CD8-positive, alpha-beta memory T cell (primary cell): ENCODE measurements at regions of chr5 and their contacts with region 1.

Region 1: DNA sequence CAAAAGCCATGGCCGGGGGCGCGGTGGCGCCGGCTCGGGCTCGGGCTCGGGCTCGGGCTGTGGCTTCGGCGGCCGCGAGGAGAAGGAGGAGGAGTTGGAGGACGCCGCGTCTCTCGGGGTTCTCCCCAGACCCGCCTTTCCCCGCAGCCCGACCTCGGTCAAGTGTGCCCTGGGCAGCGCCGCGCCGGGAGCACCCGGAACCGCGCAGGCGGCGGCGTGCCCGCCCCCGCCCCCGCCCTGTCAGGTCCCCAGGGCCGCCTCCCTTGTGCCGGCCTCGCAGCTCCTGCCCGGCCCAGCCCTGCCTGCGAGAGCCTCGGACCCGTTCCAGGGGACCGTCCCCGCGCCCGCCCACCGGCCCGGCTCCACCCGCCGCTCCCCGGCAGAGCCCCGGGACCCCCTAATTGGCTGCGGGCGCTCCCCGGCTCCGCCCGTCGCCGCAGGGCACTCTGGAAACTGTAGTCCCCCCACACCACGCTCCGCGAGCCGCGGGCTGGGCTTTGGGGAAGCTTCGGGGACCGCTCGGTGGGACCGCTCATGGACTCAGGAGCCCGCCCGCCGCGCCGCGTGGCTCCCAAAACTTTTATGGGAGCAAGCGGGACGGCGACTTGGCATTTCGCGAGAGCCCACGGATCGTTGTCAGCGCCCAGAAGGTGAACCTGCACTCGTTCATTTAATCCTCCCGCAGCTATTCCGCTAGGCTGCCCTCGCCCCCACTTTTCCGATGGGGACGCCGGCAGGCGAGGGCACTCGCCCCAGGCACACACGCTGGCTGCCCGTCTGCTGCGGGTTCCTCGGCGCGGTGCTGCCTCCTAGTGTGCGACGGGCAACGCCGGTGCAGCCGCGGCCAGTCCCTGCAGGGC is at the start of gene STK10:
- DNase-seq: peak; percentile 84 to 94 (median 92)
- H3K4me3 ChIP-seq: peak within 1 kb of the TSS; percentile 83
- H3K4me3 Mint-ChIP-seq: peak within 1 kb of the TSS; percentile 97 to 100 (median 100)
- H3K27ac ChIP-seq: peak within 1 kb of the TSS; percentile 91
- H3K27ac Mint-ChIP-seq: peak within 1 kb of the TSS; percentile 98 to 100 (median 100)
- H3K4me1 ChIP-seq: peaks cover 22% of the 10 kb centered on the region
- H3K4me1 Mint-ChIP-seq: peaks cover 23 to 30% (median 28%) of the 10 kb centered on the region in 3 donors
- H3K27me3 ChIP-seq: no peaks in the 10 kb centered on the region
- H3K27me3 Mint-ChIP-seq: peaks cover 0 to 3% of the 10 kb centered on the region in 2 donors
- total RNA-seq, gene STK10: 113 to 118 TPM

Region 2: GRCh38 chr5:171750311-171750788 is 437.9 kb before region 1 on chr5:
- CTCF ChIA-PET with region 1: no interaction called
- POLR2A ChIA-PET with region 1: no interaction called
- DNase-seq: no peak
- H3K4me3 ChIP-seq: no peak overlapping the region
- H3K4me3 Mint-ChIP-seq: no peak overlapping the region
- H3K27ac ChIP-seq: no peak overlapping the region
- H3K27ac Mint-ChIP-seq: no peak overlapping the region
- H3K4me1 ChIP-seq: no peaks in the 10 kb centered on the region
- H3K4me1 Mint-ChIP-seq: no peaks in the 10 kb centered on the region
- H3K27me3 ChIP-seq: no peaks in the 10 kb centered on the region
- H3K27me3 Mint-ChIP-seq: peaks cover 2 to 19% of the 10 kb centered on the region in 2 donors

Region 3: GRCh38 chr5:171913987-171914273 is 274.3 kb before region 1 on chr5:
- CTCF ChIA-PET with region 1: interaction called, 10 read pairs
- POLR2A ChIA-PET with region 1: no interaction called
- DNase-seq: no peak
- H3K4me3 ChIP-seq: no peak overlapping the region
- H3K4me3 Mint-ChIP-seq: no peak overlapping the region
- H3K27ac ChIP-seq: no peak overlapping the region
- H3K27ac Mint-ChIP-seq: peak overlapping the region in 4 of 8 donors; percentile 30 to 73 (median 52)
- H3K4me1 ChIP-seq: peaks cover 11% of the 10 kb centered on the region
- H3K4me1 Mint-ChIP-seq: peaks cover 44 to 60% (median 57%) of the 10 kb centered on the region in 3 donors
- H3K27me3 ChIP-seq: no peaks in the 10 kb centered on the region
- H3K27me3 Mint-ChIP-seq: no peaks in the 10 kb centered on the region

Region 4: DNA sequence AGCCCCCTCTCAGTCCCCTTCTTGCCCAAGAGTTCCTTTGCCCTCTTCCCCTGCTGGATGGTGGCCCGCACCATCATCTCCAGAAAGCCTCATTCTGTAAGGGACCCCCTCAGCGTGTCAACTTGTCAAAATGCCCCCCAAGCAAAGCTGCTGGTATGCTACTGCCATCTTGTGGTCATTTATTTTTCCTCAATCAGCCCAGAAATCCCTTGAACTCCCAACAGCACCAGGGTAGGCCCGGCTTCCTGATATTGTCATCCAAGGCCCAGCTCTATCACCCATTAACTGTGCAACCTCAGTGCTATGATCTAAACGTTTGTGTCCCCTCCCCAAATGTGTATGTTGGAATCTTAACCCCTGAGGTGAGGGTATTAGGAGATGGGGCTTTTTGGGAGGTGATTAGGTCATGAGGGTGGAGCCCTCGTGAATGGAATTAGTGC is 128.6 kb before region 1 on chr5:
- CTCF ChIA-PET with region 1: interaction called, 11 read pairs
- POLR2A ChIA-PET with region 1: interaction called, 4 read pairs
- DNase-seq: peak in 1 of 5 donors; percentile 25
- H3K4me3 ChIP-seq: no peak overlapping the region
- H3K4me3 Mint-ChIP-seq: peak overlapping the region in 1 of 7 donors; percentile 5
- H3K27ac ChIP-seq: no peak overlapping the region
- H3K27ac Mint-ChIP-seq: peak overlapping the region in 7 of 8 donors; percentile 43 to 83 (median 59)
- H3K4me1 ChIP-seq: peaks cover 4% of the 10 kb centered on the region
- H3K4me1 Mint-ChIP-seq: peaks cover 16 to 20% (median 18%) of the 10 kb centered on the region in 3 donors
- H3K27me3 ChIP-seq: no peaks in the 10 kb centered on the region
- H3K27me3 Mint-ChIP-seq: peaks cover 0 to 4% of the 10 kb centered on the region in 2 donors

Region 5: DNA sequence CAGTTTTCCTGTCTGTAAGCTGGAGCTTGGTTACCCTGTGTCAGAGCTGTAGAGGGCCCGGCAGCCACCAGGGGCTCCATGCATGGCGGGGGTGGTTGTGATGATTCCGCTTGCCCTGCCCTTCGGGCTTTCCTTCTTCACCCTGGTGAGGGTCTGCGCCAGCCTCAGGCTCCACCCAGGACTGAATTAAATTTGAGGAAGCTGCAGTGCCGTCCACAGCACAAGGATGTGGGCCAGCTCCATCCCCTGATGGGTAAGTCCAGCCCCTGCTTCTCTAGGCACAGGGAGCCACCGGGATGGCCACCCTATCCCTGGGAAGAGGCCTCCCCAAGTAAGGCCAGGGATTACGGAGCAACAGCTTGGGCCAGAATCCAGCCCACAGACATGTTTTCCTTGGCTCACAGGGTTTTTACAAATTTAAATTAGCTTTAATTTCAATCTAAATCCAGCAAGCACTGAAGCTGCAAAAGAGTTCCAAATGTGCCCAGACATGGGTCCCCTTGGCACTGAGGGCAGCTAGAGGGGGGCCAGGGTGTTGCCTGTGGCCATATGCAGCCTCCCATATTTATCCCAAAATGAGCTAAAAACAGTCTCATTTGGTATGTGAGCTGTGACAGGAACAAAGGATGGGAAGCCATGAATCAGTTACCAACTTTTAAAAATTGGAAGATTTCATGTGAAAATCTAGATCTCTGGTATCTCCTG is 92.6 kb before region 1 on chr5:
- CTCF ChIA-PET with region 1: interaction called, 29 read pairs
- POLR2A ChIA-PET with region 1: no interaction called
- DNase-seq: no peak
- H3K4me3 ChIP-seq: no peak overlapping the region
- H3K4me3 Mint-ChIP-seq: no peak overlapping the region
- H3K27ac ChIP-seq: no peak overlapping the region
- H3K27ac Mint-ChIP-seq: peak overlapping the region in 3 of 8 donors; percentile 11 to 77 (median 65)
- H3K4me1 ChIP-seq: no peaks in the 10 kb centered on the region
- H3K4me1 Mint-ChIP-seq: peaks cover 11 to 26% (median 19%) of the 10 kb centered on the region in 3 donors
- H3K27me3 ChIP-seq: no peaks in the 10 kb centered on the region
- H3K27me3 Mint-ChIP-seq: no peaks in the 10 kb centered on the region

Region 6: DNA sequence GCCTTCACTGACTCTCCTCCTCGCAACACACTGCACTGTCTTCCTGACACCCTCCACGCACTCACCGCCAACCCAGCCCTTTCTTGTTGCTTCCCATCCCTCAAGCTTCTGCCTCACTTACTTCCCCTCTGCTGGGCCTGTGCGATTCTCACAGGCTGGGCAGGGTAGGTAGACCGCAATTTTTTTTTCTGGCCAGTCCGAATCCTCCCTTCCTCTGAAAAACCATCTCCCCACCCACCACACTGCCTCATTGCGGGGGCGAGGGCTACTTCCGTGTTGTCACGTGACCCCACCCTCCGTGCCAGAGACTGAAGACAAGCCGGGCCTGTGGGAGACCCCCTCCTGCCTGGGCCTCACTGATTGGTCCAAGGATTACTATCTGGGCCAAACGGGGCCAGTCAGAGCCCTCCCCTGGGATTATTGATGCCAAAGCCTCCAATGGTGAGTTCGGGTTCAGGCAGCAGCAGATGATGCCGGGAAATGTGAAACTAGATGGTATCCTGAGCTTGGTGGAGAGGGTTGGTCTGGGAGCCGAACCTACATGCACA is 73.3 kb before region 1 on chr5:
- CTCF ChIA-PET with region 1: interaction called, 177 read pairs
- POLR2A ChIA-PET with region 1: interaction called, 23 read pairs
- DNase-seq: peak; percentile 37 to 85 (median 71)
- H3K4me3 ChIP-seq: peak overlapping the region; percentile 40
- H3K4me3 Mint-ChIP-seq: peak overlapping the region; percentile 65 to 92 (median 78)
- H3K27ac ChIP-seq: peak overlapping the region; percentile 48
- H3K27ac Mint-ChIP-seq: peak overlapping the region; percentile 83 to 100 (median 96)
- H3K4me1 ChIP-seq: peaks cover 86% of the 10 kb centered on the region
- H3K4me1 Mint-ChIP-seq: peaks cover 73 to 90% (median 89%) of the 10 kb centered on the region in 3 donors
- H3K27me3 ChIP-seq: no peaks in the 10 kb centered on the region
- H3K27me3 Mint-ChIP-seq: peaks cover 0 to 4% of the 10 kb centered on the region in 2 donors

Region 7: GRCh38 chr5:172144291-172144815 is 43.9 kb before region 1 on chr5:
- CTCF ChIA-PET with region 1: interaction called, 11 read pairs
- POLR2A ChIA-PET with region 1: interaction called, 5 read pairs
- DNase-seq: peak in 1 of 5 donors; percentile 42
- H3K4me3 ChIP-seq: no peak overlapping the region
- H3K4me3 Mint-ChIP-seq: peak overlapping the region in 5 of 7 donors; percentile 6 to 62 (median 52)
- H3K27ac ChIP-seq: no peak overlapping the region
- H3K27ac Mint-ChIP-seq: peak overlapping the region; percentile 76 to 98 (median 84)
- H3K4me1 ChIP-seq: peaks cover 94% of the 10 kb centered on the region
- H3K4me1 Mint-ChIP-seq: peaks cover 85 to 97% (median 95%) of the 10 kb centered on the region in 3 donors
- H3K27me3 ChIP-seq: no peaks in the 10 kb centered on the region
- H3K27me3 Mint-ChIP-seq: peaks cover 0 to 2% of the 10 kb centered on the region in 2 donors

Region 8: DNA sequence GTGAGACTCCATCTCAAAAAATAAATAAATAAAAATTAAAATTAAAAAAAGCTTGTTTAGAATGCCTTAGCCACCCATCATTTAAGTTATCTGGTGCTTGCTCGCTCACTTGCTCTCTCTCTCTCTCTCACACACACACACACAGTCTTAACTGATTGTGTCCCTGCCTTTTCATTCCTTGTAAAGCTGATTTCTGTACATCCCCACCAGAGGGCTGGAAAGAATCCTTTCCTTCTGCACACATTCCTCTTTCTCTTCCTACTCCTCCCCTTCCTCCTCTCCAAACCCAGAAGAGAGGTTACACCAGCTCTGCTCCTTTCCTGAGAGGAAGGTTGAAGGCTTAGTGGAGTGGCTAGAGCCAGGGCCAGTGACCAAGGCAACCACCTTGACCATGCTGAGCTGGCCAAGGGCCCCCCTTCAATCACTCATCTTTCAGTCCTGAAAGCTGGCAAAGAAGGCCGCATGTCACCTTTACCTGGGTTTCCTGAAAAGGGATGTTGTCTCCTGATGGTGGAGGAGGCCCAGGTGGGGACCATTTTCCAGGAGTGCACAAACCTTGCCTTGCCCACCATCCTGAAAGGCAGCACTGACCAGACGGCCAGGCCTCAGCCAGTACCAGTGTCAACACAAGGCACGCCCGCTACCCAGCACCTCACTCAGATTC is 25.8 kb before region 1 on chr5:
- CTCF ChIA-PET with region 1: interaction called, 340 read pairs
- POLR2A ChIA-PET with region 1: no interaction called
- DNase-seq: no peak
- H3K4me3 ChIP-seq: no peak overlapping the region
- H3K4me3 Mint-ChIP-seq: peak overlapping the region in 5 of 7 donors; percentile 26 to 85 (median 54)
- H3K27ac ChIP-seq: no peak overlapping the region
- H3K27ac Mint-ChIP-seq: peak overlapping the region; percentile 19 to 94 (median 85)
- H3K4me1 ChIP-seq: peaks cover 85% of the 10 kb centered on the region
- H3K4me1 Mint-ChIP-seq: peaks cover 69 to 89% (median 82%) of the 10 kb centered on the region in 3 donors
- H3K27me3 ChIP-seq: no peaks in the 10 kb centered on the region
- H3K27me3 Mint-ChIP-seq: no peaks in the 10 kb centered on the region